Ascending aorta (tissue), 2 donors: ENCODE measurements at regions of chr12 and their contacts with region 1.

Region 1: GRCh38 chr12:6688999-6689882 is at the start of gene ZNF384:
- DNase-seq: peak; percentile 91 to 99
- H3K4me3 ChIP-seq: peak within 1 kb of the TSS; percentile 68 to 91
- H3K27ac ChIP-seq: peak within 1 kb of the TSS; percentile 96 to 98
- H3K4me1 ChIP-seq: peaks cover 9 to 26% of the 10 kb centered on the region in 2 donors
- H3K27me3 ChIP-seq: no peaks in the 10 kb centered on the region
- CTCF ChIP-seq: peak in 1 of 3 experiments; percentile 27
- total RNA-seq, gene ZNF384: 15.1 TPM

Region 2: GRCh38 chr12:6613776-6614512 is 75.3 kb before region 1 on chr12:
- intact Hi-C with region 1: loop called (anchors 1 kb)
- DNase-seq: peak; percentile 85 to 96
- H3K4me3 ChIP-seq: peak overlapping the region in 1 of 2 donors; percentile 35
- H3K27ac ChIP-seq: peak overlapping the region; percentile 94 to 97
- H3K4me1 ChIP-seq: peaks cover 17 to 22% of the 10 kb centered on the region in 2 donors
- H3K27me3 ChIP-seq: no peaks in the 10 kb centered on the region
- CTCF ChIP-seq: peak in 1 of 3 experiments; percentile 3

Region 3: DNA sequence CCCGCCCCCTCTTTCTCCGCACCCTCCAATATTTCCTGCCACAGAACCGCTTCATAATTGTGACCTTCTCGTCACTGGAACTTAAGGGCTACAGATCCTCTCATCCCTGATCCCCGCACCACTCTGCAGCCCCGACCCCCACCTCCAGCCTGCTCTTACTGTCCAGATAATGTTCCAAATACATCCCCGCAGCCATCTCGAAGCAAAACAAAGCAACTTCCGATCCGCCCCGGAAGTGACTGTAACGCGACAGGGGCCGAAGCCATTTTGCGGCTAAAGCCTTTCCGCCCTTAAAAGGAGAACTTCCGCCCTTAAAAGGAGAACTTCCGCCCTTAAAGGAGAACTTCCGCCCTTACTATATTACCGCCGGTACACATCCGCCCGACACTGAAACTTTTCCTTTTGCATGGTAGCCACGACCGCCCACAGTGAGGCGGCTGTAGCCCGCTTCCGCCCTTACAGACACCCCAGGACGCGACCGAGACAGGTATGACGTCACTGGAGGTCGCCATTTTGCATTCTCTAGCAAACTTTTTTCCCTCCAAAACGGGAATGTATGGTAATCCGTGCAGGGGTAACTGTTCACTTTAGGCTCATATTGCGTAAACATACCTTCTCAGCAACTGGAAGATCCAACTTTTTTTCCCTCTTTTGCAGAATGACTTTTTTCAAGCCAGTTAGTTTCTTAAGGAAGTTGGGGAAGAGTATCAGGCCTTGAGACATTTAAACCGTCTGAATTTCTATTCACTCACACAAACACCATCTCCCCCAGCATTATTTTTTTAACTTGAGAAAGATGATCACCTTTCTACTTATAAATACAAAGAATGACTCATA is 26.1 kb before region 1 on chr12 and contains the start of gene ING4:
- intact Hi-C with region 1: loop called (anchors 1 kb)
- DNase-seq: peak; percentile 96 to 99
- H3K4me3 ChIP-seq: peak within 1 kb of the TSS; percentile 75 to 82
- H3K27ac ChIP-seq: peak within 1 kb of the TSS; percentile 77 to 80
- H3K4me1 ChIP-seq: peaks cover 4 to 12% of the 10 kb centered on the region in 2 donors
- H3K27me3 ChIP-seq: no peaks in the 10 kb centered on the region
- CTCF ChIP-seq: no peak
- total RNA-seq, gene ING4: 2.6 TPM

Region 4: GRCh38 chr12:6708960-6709394 is 19.7 kb after region 1 on chr12:
- intact Hi-C with region 1: no loop called
- DNase-seq: no peak
- H3K4me3 ChIP-seq: no peak overlapping the region
- H3K27ac ChIP-seq: no peak overlapping the region
- H3K4me1 ChIP-seq: no peaks in the 10 kb centered on the region
- H3K27me3 ChIP-seq: no peaks in the 10 kb centered on the region
- CTCF ChIP-seq: no peak

Region 5: GRCh38 chr12:6723607-6724396 is 34.6 kb after region 1 on chr12 and contains the start of gene COPS7A:
- intact Hi-C with region 1: loop called (anchors 1 kb)
- DNase-seq: peak; percentile 91 to 99
- H3K4me3 ChIP-seq: peak within 1 kb of the TSS; percentile 62 to 70
- H3K27ac ChIP-seq: peak within 1 kb of the TSS; percentile 75 to 93
- H3K4me1 ChIP-seq: peaks cover 0 to 8% of the 10 kb centered on the region in 2 donors
- H3K27me3 ChIP-seq: no peaks in the 10 kb centered on the region
- CTCF ChIP-seq: no peak
- total RNA-seq, gene COPS7A: 221 TPM

Region 6: DNA sequence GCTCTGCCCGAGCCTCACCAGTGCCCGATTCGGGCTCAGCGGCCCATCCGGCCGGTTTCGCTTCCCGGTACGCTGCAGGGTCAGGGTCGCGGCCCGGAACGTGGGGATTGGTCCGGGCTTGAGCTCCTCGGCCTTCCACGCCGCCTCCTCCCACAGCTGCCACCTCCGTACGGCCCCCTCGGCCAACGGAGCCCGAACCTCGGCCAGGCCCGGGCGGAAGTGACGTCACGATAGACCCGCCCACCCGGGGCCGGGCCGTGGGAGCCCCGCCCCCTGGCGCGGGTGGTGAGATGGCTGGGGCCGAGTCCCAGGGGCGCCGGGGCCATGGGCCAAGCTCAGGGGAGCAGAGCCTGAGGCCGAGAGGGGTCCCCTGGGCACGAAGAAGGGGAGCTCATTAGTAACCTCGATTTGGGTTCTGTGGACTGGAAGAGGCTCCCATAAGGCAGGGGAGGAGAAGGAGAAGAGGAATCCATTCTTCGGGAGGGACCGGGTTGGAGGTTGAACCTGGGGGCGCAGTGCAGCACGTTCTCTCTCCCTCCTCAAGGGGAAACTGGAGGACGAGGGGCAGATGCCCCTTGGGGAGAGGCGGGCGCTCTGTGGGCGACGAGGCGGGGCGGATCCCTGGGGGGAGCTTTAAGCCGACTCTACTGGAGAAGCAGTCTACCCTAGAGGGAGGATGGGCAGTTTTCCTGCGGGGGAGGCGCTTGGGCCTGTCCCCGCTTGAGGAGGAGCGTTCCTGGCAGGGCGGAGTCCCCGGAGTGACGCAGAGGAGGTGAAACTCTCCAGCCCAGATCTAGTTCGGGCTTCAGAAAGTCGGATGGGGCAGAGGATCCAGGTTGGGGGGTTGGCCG is 63.9 kb after region 1 on chr12 and contains the start of gene MLF2:
- intact Hi-C with region 1: loop called (anchors 2 kb)
- DNase-seq: peak; percentile 93 to 99
- H3K4me3 ChIP-seq: peak within 1 kb of the TSS; percentile 59 to 96
- H3K27ac ChIP-seq: peak within 1 kb of the TSS; percentile 95 to 98
- H3K4me1 ChIP-seq: peaks cover 7 to 9% of the 10 kb centered on the region in 2 donors
- H3K27me3 ChIP-seq: no peaks in the 10 kb centered on the region
- CTCF ChIP-seq: peak in 1 of 3 experiments; percentile 91
- total RNA-seq, gene MLF2: 145 TPM

Region 7: GRCh38 chr12:6764011-6764828 is 75.0 kb after region 1 on chr12:
- intact Hi-C with region 1: loop called (anchors 2 kb)
- DNase-seq: peak; percentile 85 to 96
- H3K4me3 ChIP-seq: peak overlapping the region; percentile 96 to 97
- H3K27ac ChIP-seq: peak overlapping the region; percentile 84 to 97
- H3K4me1 ChIP-seq: peaks cover 10 to 29% of the 10 kb centered on the region in 2 donors
- H3K27me3 ChIP-seq: no peaks in the 10 kb centered on the region
- CTCF ChIP-seq: no peak

Region 8: DNA sequence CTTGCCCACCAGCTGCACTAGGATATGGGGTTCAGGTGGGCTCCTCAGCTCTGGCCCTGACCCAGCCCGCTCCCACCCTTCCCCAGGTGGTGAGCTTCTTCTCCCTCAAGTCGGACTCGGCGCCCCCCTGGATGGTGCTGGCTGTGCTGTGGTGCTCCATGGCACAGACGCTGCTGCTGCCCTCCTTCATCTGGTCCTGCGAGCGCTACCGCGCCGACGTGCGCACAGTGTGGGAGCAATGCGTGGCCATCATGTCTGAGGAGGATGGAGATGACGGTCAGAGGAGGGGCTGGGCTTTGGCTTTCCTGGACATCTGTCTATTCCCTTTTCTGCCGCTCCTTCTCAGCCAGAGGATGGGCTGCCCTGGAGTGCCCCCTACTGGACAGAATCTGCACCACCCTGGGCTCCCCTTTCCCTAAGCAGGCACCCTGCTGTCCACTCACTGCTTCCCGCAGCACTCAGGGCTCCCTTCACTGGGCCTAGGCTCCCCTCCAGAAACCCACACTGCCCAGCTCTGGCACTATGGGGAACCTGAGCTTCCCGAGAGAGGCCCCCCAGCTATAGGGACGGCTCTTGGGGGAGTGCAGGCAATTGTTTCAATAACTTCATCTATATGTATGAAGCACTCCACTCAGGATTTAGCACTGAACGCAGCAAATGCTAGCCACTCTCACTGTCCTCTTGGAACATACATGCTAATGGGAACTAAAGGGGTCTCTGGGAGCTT is 136.3 kb after region 1 on chr12:
- intact Hi-C with region 1: loop called (anchors 5 kb)
- DNase-seq: peak; percentile 53 to 93
- H3K4me3 ChIP-seq: peak overlapping the region in 1 of 2 donors; percentile 46
- H3K27ac ChIP-seq: no peak overlapping the region
- H3K4me1 ChIP-seq: peaks cover 3 to 23% of the 10 kb centered on the region in 2 donors
- H3K27me3 ChIP-seq: peaks cover 7% of the 10 kb centered on the region
- CTCF ChIP-seq: peak; percentile 90 to 93 (median 91)